ENCODE measurements at regions of chr6 and their contacts with region 1.

Region 1: DNA sequence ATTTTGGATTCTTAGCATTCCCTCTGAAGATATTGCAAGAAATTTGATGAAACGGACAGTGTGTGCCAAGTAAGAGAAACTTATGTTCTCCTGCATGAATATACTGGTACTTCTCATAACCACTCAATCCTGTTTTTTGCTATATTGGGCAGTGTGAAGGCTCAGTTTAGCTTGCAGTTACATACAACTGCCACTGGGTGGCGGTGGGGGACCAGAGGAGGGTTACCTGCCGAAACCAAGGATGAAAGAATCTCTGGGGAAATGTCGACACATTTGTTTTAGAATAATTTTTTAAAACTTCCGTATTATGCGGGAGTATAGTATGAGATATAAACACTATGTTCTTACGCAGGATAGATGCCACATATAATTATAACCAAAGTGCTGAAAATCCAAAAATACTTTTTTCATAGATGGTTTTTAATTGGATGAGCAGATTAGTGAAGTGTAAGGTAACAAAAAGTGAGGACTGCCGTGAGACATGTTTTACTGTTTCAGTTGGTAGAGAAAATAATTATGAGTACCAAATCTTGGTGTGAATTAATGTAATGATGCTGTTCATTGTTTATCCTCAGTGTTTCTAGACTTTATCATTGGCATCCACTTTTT is 9.7 kb downstream of the TRMT11 start:
- DNase-seq: peak; percentile 91
- H3K4me3 Mint-ChIP-seq: peak overlapping the region; percentile 63
- H3K27ac Mint-ChIP-seq: no peak overlapping the region
- H3K4me1 Mint-ChIP-seq: peaks cover 13% of the 10 kb centered on the region
- H3K27me3 Mint-ChIP-seq: no peaks in the 10 kb centered on the region

Region 2: DNA sequence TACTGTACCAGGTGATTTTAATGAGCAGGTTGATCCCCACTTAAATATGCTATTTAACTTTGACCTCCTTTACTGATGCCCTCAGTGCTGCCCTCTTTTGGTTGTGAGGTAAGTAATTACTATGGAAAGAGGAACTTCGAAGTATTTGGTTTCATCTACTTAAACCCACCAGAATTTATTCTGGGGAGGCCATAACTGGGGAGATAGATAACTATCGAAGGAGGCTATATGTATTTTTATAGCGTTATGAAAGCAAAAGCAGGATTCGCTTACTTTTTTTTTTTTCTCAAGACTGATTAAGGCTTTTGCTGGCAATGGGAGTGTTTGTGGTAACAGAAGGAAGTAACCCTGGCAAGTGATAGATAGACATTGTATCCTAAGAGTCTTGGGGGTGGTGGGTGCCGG is 174.9 kb after region 1 on chr6:
- intact Hi-C with region 1: loop called (anchors 1 kb)
- DNase-seq: peak; percentile 71
- H3K4me3 Mint-ChIP-seq: peak overlapping the region; percentile 55
- H3K27ac Mint-ChIP-seq: no peak overlapping the region
- H3K4me1 Mint-ChIP-seq: peaks cover 2% of the 10 kb centered on the region
- H3K27me3 Mint-ChIP-seq: peaks cover 2% of the 10 kb centered on the region

Region 3: GRCh38 chr6:126657561-126658175 is 661.6 kb after region 1 on chr6:
- intact Hi-C with region 1: loop called (anchors 10 kb)
- DNase-seq: no peak
- H3K4me3 Mint-ChIP-seq: no peak overlapping the region
- H3K27ac Mint-ChIP-seq: no peak overlapping the region
- H3K4me1 Mint-ChIP-seq: no peaks in the 10 kb centered on the region
- H3K27me3 Mint-ChIP-seq: no peaks in the 10 kb centered on the region

Region 4: GRCh38 chr6:127120787-127121636 is 1124.9 kb after region 1 on chr6:
- intact Hi-C with region 1: loop called (anchors 1 kb)
- DNase-seq: peak; percentile 91
- H3K4me3 Mint-ChIP-seq: peak overlapping the region; percentile 28
- H3K27ac Mint-ChIP-seq: no peak overlapping the region
- H3K4me1 Mint-ChIP-seq: peaks cover 18% of the 10 kb centered on the region
- H3K27me3 Mint-ChIP-seq: peaks cover 71% of the 10 kb centered on the region